B cell (primary cell): ENCODE measurements at regions of chr12 and their contacts with region 1.

Region 1: DNA sequence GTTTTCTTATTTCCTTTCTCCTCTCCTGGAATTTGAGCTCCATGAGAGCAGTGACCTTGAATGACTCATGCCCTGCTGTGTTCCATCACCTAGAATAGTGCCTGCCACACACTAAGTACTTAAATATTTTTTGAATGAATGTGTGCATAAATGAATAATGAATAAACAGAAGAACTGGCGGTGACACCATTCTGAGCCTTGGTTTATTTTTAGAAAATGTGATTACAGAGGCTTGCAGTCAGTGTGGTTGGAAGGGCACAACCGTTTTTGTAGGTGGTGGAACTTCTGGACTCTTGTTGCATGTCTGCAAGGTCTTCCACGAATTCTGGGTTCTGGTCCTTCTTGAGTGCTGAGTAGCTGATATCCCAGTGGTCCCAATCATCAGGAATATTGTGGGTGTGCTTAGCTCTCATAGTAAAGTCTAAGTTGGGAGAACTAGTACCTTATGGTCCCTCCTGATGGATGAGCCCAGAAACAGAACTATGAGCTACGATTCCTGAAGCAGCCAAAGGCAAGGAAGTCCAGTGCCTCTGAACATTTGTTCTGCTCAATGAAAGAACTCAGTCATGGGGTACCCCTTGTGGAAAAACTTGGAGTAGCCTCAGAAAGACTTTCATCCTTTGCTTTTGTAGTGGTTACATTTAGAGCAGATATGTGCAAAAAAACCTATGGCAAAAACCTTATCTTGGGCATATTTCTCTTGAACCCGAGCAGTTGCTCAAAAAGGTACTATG is 28.8 kb upstream of the BHLHE41 start:
- DNase-seq: no peak
- ATAC-seq: no peak
- H3K4me3 ChIP-seq: no peak overlapping the region
- H3K4me3 Mint-ChIP-seq: no peak overlapping the region
- H3K27ac ChIP-seq: peak overlapping the region; percentile 14 to 88
- H3K27ac Mint-ChIP-seq: peak overlapping the region; percentile 99
- H3K4me1 ChIP-seq: peaks cover 60 to 65% of the 10 kb centered on the region in 2 donors
- H3K4me1 Mint-ChIP-seq: peaks cover 82% of the 10 kb centered on the region
- H3K27me3 ChIP-seq: no peaks in the 10 kb centered on the region
- H3K27me3 Mint-ChIP-seq: no peaks in the 10 kb centered on the region
- CTCF ChIP-seq: no peak

Region 2: GRCh38 chr12:25725931-25726330 is 427.7 kb before region 1 on chr12:
- CTCF ChIA-PET with region 1: no interaction called
- POLR2A ChIA-PET with region 1: no interaction called
- intact Hi-C with region 1: no loop called
- DNase-seq: no peak
- ATAC-seq: no peak
- H3K4me3 ChIP-seq: no peak overlapping the region
- H3K4me3 Mint-ChIP-seq: no peak overlapping the region
- H3K27ac ChIP-seq: no peak overlapping the region
- H3K27ac Mint-ChIP-seq: no peak overlapping the region
- H3K4me1 ChIP-seq: no peaks in the 10 kb centered on the region
- H3K4me1 Mint-ChIP-seq: no peaks in the 10 kb centered on the region
- H3K27me3 ChIP-seq: no peaks in the 10 kb centered on the region
- H3K27me3 Mint-ChIP-seq: peaks cover 3% of the 10 kb centered on the region
- CTCF ChIP-seq: no peak

Region 3: DNA sequence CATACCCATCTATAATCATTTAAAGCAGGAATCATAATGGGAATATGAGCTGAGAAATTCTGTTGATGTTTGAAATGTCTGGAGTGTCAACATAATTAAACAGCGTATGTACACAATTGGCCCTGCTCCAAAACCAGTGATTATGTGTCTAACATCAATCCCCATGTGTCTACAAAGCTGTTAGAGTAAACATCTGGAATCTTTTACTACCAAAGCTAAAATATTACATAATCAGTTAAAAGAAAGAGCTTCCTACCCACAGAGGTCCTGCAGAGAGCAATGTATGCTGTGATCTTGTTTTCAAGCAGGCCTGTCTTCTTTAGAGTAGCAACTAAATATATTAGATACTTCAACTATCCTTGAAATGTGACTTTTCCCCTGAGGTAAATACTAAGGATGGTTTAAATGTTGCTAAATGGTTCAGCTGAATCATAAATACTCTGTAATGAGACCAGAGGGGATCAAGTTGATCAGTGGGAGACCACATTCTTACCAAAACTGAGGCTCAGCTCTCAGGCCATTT is 120.8 kb before region 1 on chr12:
- CTCF ChIA-PET with region 1: no interaction called
- POLR2A ChIA-PET with region 1: no interaction called
- intact Hi-C with region 1: no loop called
- DNase-seq: no peak
- ATAC-seq: no peak
- H3K4me3 ChIP-seq: no peak overlapping the region
- H3K4me3 Mint-ChIP-seq: no peak overlapping the region
- H3K27ac ChIP-seq: no peak overlapping the region
- H3K27ac Mint-ChIP-seq: no peak overlapping the region
- H3K4me1 ChIP-seq: no peaks in the 10 kb centered on the region
- H3K4me1 Mint-ChIP-seq: no peaks in the 10 kb centered on the region
- H3K27me3 ChIP-seq: no peaks in the 10 kb centered on the region
- H3K27me3 Mint-ChIP-seq: no peaks in the 10 kb centered on the region
- CTCF ChIP-seq: no peak

Region 4: GRCh38 chr12:26195641-26196420 is 42.2 kb after region 1 on chr12:
- CTCF ChIA-PET with region 1: interaction called, 16 read pairs
- POLR2A ChIA-PET with region 1: interaction called, 15 read pairs
- intact Hi-C with region 1: loop called (anchors 1 kb)
- DNase-seq: peak; percentile 54
- ATAC-seq: peak; percentile 77
- H3K4me3 ChIP-seq: peak overlapping the region; percentile 44 to 74 (median 64)
- H3K4me3 Mint-ChIP-seq: peak overlapping the region; percentile 98
- H3K27ac ChIP-seq: peak overlapping the region in 1 of 2 donors; percentile 7
- H3K27ac Mint-ChIP-seq: peak overlapping the region; percentile 97
- H3K4me1 ChIP-seq: peaks cover 6 to 15% of the 10 kb centered on the region in 2 donors
- H3K4me1 Mint-ChIP-seq: peaks cover 16% of the 10 kb centered on the region
- H3K27me3 ChIP-seq: peaks cover 0 to 5% (median 0%) of the 10 kb centered on the region in 4 experiments
- H3K27me3 Mint-ChIP-seq: peaks cover 4% of the 10 kb centered on the region
- CTCF ChIP-seq: no peak

Region 5: GRCh38 chr12:26274441-26275312 is 121.1 kb after region 1 on chr12:
- CTCF ChIA-PET with region 1: interaction called, 3 read pairs
- POLR2A ChIA-PET with region 1: interaction called, 5 read pairs
- intact Hi-C with region 1: loop called (anchors 1 kb)
- DNase-seq: peak; percentile 58
- ATAC-seq: peak; percentile 96
- H3K4me3 ChIP-seq: no peak overlapping the region
- H3K4me3 Mint-ChIP-seq: peak overlapping the region; percentile 18
- H3K27ac ChIP-seq: no peak overlapping the region
- H3K27ac Mint-ChIP-seq: peak overlapping the region; percentile 78
- H3K4me1 ChIP-seq: peaks cover 16 to 28% of the 10 kb centered on the region in 2 donors
- H3K4me1 Mint-ChIP-seq: peaks cover 43% of the 10 kb centered on the region
- H3K27me3 ChIP-seq: no peaks in the 10 kb centered on the region
- H3K27me3 Mint-ChIP-seq: no peaks in the 10 kb centered on the region
- CTCF ChIP-seq: no peak

Region 6: DNA sequence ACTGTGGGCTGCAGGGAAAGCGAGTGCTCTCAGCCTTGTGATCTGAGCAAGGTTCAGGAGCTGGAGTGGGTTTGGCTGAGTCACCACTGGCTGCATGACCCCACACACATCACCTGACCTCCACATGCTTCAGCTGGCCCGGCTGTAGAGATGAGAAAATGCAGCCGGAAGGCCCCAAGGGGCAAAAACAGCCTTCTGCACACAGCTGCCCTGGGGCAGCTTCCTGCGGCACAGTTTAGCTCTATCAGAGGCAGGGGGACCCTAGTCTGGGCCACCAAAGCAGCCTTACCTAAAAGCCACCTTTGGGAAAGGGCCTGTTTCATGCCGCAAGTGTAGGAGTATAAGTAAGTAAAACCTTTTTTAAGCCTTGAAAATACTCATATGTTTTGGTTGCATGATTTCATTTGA is 165.1 kb after region 1 on chr12:
- CTCF ChIA-PET with region 1: interaction called, 5 read pairs
- POLR2A ChIA-PET with region 1: interaction called, 3 read pairs
- intact Hi-C with region 1: loop called (anchors 1 kb)
- DNase-seq: peak; percentile 48
- ATAC-seq: peak; percentile 86
- H3K4me3 ChIP-seq: no peak overlapping the region
- H3K4me3 Mint-ChIP-seq: peak overlapping the region; percentile 71
- H3K27ac ChIP-seq: peak overlapping the region in 1 of 2 donors; percentile 14
- H3K27ac Mint-ChIP-seq: peak overlapping the region; percentile 88
- H3K4me1 ChIP-seq: peaks cover 20 to 30% of the 10 kb centered on the region in 2 donors
- H3K4me1 Mint-ChIP-seq: peaks cover 35% of the 10 kb centered on the region
- H3K27me3 ChIP-seq: no peaks in the 10 kb centered on the region
- H3K27me3 Mint-ChIP-seq: no peaks in the 10 kb centered on the region
- CTCF ChIP-seq: no peak

Region 7: DNA sequence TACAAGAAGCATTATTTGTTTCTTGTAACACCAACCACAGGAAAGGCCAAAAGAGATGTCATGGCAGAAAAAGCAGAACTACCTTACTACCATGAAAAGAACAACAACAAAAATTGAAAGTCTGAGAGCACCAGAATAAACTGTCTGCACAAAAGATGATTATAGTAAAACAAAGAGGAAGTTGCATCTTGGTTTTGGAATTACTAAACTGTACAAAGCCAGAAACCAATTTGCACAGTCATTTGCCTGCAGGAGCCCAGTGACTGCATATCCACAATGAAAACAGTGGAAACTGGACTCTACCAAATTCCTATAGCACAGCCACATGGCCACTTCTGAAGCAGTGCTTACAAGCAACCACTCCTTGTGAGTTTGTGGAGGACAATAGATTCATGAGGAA is 318.0 kb after region 1 on chr12:
- CTCF ChIA-PET with region 1: no interaction called
- POLR2A ChIA-PET with region 1: no interaction called
- intact Hi-C with region 1: loop called (anchors 1 kb)
- DNase-seq: peak; percentile 69
- ATAC-seq: peak; percentile 70
- H3K4me3 ChIP-seq: peak overlapping the region in 1 of 5 experiments; percentile 8
- H3K4me3 Mint-ChIP-seq: peak overlapping the region; percentile 36
- H3K27ac ChIP-seq: peak overlapping the region; percentile 39 to 63
- H3K27ac Mint-ChIP-seq: peak overlapping the region; percentile 78
- H3K4me1 ChIP-seq: peaks cover 30 to 38% of the 10 kb centered on the region in 2 donors
- H3K4me1 Mint-ChIP-seq: peaks cover 47% of the 10 kb centered on the region
- H3K27me3 ChIP-seq: no peaks in the 10 kb centered on the region
- H3K27me3 Mint-ChIP-seq: no peaks in the 10 kb centered on the region
- CTCF ChIP-seq: no peak

Region 8: DNA sequence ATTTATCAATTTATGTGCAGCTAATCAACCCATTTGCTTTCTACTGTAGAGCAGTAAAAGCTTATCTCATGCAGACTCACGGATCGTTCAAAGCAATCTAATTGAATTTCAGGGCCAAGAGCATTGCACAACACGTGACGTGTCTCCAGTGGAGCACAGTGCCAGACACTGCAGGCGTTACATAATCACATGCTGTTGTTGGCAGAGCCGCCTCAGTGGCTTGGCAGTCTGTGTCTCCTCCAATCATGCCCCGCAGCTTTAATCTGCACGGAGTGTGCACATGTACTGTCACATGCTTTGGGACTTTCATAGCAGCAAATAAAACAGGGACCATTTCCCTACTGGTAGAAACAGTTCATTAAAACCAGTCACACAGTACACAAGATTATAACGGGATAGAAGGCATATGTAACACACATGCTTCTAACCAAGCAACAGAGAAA is 370.1 kb after region 1 on chr12:
- CTCF ChIA-PET with region 1: no interaction called
- POLR2A ChIA-PET with region 1: no interaction called
- intact Hi-C with region 1: loop called (anchors 1 kb)
- DNase-seq: no peak
- ATAC-seq: no peak
- H3K4me3 ChIP-seq: no peak overlapping the region
- H3K4me3 Mint-ChIP-seq: no peak overlapping the region
- H3K27ac ChIP-seq: no peak overlapping the region
- H3K27ac Mint-ChIP-seq: no peak overlapping the region
- H3K4me1 ChIP-seq: peaks cover 5 to 6% of the 10 kb centered on the region in 2 donors
- H3K4me1 Mint-ChIP-seq: peaks cover 10% of the 10 kb centered on the region
- H3K27me3 ChIP-seq: no peaks in the 10 kb centered on the region
- H3K27me3 Mint-ChIP-seq: no peaks in the 10 kb centered on the region
- CTCF ChIP-seq: no peak